ENCODE measurements at regions of chr18 and their contacts with region 1.

Region 1: GRCh38 chr18:1585879-1586488 is 681.3 kb downstream of the ADCYAP1 start:
- DNase-seq: peak; percentile 69
- ATAC-seq: peak; percentile 78
- H3K4me3 ChIP-seq: no peak overlapping the region
- H3K27ac ChIP-seq: no peak overlapping the region
- H3K4me1 ChIP-seq: no peaks in the 10 kb centered on the region
- H3K27me3 ChIP-seq: peaks cover 73% of the 10 kb centered on the region
- CTCF ChIP-seq: peak; percentile 73

Region 2: DNA sequence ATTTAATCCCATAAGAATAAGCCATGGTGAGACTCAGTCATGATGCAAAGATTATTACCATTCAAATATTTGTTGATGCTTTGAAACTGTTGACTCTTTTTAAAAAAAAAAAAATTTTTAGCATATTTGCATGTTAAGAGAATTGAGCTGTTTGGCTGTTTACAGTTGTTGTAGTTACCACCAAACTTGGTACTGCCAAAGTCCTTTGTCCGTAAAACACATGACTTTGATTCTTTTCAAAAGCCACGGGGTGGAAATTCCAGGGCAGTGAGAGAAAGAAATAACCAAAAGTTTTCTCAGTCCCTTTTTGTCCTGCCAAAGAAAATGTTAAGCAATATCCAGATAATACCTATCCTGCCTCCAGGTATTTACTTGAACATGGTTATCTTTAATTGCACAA is 510.6 kb after region 1 on chr18:
- CTCF ChIA-PET with region 1: no interaction called
- POLR2A ChIA-PET with region 1: no interaction called
- intact Hi-C with region 1: loop called (anchors 10 kb)
- DNase-seq: no peak
- ATAC-seq: no peak
- H3K4me3 ChIP-seq: no peak overlapping the region
- H3K27ac ChIP-seq: no peak overlapping the region
- H3K4me1 ChIP-seq: no peaks in the 10 kb centered on the region
- H3K27me3 ChIP-seq: no peaks in the 10 kb centered on the region
- CTCF ChIP-seq: no peak

Measured in PC-3 (cell line).